Calu3 (cell line): ENCODE measurements at regions of chr13 and their contacts with region 1.

Region 1: DNA sequence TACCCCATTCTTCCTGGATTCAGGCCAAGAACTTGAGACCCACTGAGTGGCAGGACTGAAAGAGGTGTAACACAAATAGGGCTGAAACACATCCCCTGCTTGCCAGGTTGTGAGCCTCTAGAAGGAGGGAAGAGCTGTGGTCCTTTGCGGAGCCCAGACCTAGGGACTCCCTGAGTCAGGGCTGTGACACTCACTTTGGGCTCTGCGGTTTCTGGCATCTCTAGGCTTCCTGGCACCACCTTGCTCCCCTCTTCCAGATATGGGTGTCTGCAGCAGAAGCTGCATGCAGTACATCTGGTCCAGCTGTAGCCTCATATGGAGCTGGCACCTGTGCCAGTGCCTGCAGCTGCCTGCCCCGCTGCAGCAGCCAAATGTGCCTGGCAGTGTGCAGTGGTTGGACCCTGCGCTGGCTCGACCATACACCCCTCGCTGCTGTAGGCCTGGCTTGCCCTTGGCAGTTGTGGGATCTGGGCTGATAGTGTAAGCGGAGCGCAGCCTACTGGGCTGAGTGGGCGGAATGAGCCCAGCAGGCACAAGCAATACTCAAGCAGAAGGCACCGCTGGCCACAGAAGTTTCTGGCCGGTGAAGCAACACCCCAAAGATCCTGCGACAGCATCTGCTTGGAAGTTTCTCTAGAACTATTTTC is 290.4 kb downstream of the SLITRK6 start:
- DNase-seq: no peak
- H3K4me3 Mint-ChIP-seq: no peak overlapping the region
- H3K27ac Mint-ChIP-seq: no peak overlapping the region
- H3K4me1 Mint-ChIP-seq: peaks cover 27% of the 10 kb centered on the region
- H3K27me3 Mint-ChIP-seq: no peaks in the 10 kb centered on the region
- CTCF ChIP-seq: no peak

Region 2: DNA sequence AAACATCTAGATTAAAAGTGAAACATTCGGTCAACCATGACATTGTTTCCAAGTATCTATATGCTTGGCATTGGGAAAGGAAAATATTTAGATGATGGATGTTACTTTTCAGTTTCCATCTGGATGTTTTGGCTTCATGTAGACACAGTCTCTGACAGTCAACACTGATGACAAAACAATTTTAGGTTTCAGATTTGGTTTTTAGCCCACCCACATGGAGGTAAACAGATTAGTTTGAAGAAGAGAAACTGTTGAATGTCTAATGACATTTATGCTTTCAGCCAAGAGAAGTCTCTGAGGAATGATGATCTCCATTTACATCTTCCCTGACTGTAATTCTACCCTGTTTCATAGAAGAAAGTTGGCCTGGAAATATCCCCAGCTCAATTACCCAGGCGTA is 88.7 kb before region 1 on chr13:
- CTCF ChIA-PET with region 1: no interaction called
- intact Hi-C with region 1: no loop called
- DNase-seq: no peak
- H3K4me3 Mint-ChIP-seq: no peak overlapping the region
- H3K27ac Mint-ChIP-seq: no peak overlapping the region
- H3K4me1 Mint-ChIP-seq: no peaks in the 10 kb centered on the region
- H3K27me3 Mint-ChIP-seq: no peaks in the 10 kb centered on the region
- CTCF ChIP-seq: no peak

Region 3: GRCh38 chr13:85729296-85729695 is 220.5 kb after region 1 on chr13:
- CTCF ChIA-PET with region 1: no interaction called
- intact Hi-C with region 1: loop called (anchors 10 kb)
- DNase-seq: no peak
- H3K4me3 Mint-ChIP-seq: no peak overlapping the region
- H3K27ac Mint-ChIP-seq: no peak overlapping the region
- H3K4me1 Mint-ChIP-seq: no peaks in the 10 kb centered on the region
- H3K27me3 Mint-ChIP-seq: no peaks in the 10 kb centered on the region
- CTCF ChIP-seq: no peak